A549 (cell line): ENCODE measurements at regions of chr5 and their contacts with region 1.

Region 1: GRCh38 chr5:154461531-154461930 is 15.7 kb downstream of the SAP30L start:
- DNase-seq: peak in 1 of 2 experiments; percentile 40
- ATAC-seq: peak; percentile 82 to 86
- H3K4me3 ChIP-seq: no peak overlapping the region
- H3K27ac ChIP-seq: no peak overlapping the region
- H3K4me1 ChIP-seq: peaks cover 19% of the 10 kb centered on the region
- CTCF ChIP-seq: peak; percentile 24; the same call in 2 of the 3 replicates
- EP300 ChIP-seq: no peak
- POLR2A ChIP-seq: no peak
- RAD21 ChIP-seq: peak; percentile 21 to 45; a peak in 2 of 5 replicates

Region 2: GRCh38 chr5:154446183-154447088 is 15.1 kb before region 1 on chr5:
- CTCF ChIA-PET with region 1: interaction called, 24 read pairs
- POLR2A ChIA-PET with region 1: no interaction called
- DNase-seq: peak; percentile 39 to 46
- ATAC-seq: peak; percentile 55 to 57
- H3K4me3 ChIP-seq: peak overlapping the region; percentile 95
- H3K27ac ChIP-seq: peak overlapping the region; percentile 70 to 96
- H3K4me1 ChIP-seq: peaks cover 29% of the 10 kb centered on the region
- CTCF ChIP-seq: no peak
- EP300 ChIP-seq: no peak
- POLR2A ChIP-seq: no peak
- RAD21 ChIP-seq: no peak

Region 3: GRCh38 chr5:154627698-154628678 is 166.5 kb after region 1 on chr5:
- CTCF ChIA-PET with region 1: interaction called, 25 read pairs
- POLR2A ChIA-PET with region 1: no interaction called
- DNase-seq: no peak
- ATAC-seq: no peak
- H3K4me3 ChIP-seq: no peak overlapping the region
- H3K27ac ChIP-seq: no peak overlapping the region
- H3K4me1 ChIP-seq: no peaks in the 10 kb centered on the region
- CTCF ChIP-seq: no peak
- EP300 ChIP-seq: no peak
- POLR2A ChIP-seq: no peak
- RAD21 ChIP-seq: no peak